HepG2 (cell line): ENCODE measurements at regions of chr3 and their contacts with region 1.

Region 1: DNA sequence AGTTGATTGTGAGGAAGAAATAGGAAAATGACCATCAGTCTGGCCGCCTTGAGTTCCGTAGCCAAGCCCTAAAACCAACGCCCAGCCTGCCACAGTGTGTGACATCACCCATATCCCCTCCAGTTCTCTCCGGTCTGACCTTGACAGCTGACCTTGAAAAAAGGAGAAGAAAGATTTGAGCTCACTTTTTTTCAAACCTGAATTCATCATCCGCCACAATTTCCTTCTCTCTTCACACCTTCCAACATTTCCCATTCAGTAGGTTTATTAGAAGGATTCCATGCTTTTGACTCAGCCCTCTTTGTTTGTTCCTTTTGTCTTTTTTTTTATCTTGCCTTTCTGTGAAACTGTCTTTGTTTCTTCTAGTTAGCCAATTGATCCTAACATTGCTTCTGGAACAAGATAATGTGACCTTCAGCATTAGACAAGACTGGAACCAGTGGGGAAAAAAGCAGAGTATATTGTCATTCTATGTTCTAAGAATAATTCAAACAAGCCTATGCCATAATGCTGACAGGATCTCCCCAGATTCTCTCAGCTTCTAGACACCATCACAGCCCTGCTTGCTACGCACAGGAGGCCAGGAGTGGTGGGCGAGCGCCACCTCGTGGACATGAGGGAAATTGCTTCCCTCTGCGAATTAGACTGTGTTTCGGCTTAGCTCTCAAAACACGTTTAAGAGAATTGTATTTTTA is 283.1 kb downstream of the FGF12 start:
- DNase-seq: peak; percentile 24
- ATAC-seq: peak; percentile 95
- H3K4me3 ChIP-seq: no peak overlapping the region
- H3K27ac ChIP-seq: no peak overlapping the region
- H3K4me1 ChIP-seq: no peaks in the 10 kb centered on the region
- H3K27me3 ChIP-seq: no peaks in the 10 kb centered on the region
- CTCF ChIP-seq: peak; percentile 95
- EP300 ChIP-seq: no peak
- POLR2A ChIP-seq: no peak
- RAD21 ChIP-seq: peak; percentile 74

Region 2: GRCh38 chr3:191412759-191413158 is 1031.5 kb before region 1 on chr3:
- CTCF ChIA-PET with region 1: interaction called, 4 read pairs
- POLR2A ChIA-PET with region 1: no interaction called
- in situ Hi-C with region 1: loop called (anchors 10 kb)
- intact Hi-C with region 1: loop called (anchors 1 kb)
- DNase-seq: no peak
- ATAC-seq: no peak
- H3K4me3 ChIP-seq: no peak overlapping the region
- H3K27ac ChIP-seq: no peak overlapping the region
- H3K4me1 ChIP-seq: no peaks in the 10 kb centered on the region
- H3K27me3 ChIP-seq: no peaks in the 10 kb centered on the region
- CTCF ChIP-seq: no peak
- EP300 ChIP-seq: no peak
- POLR2A ChIP-seq: no peak
- RAD21 ChIP-seq: no peak

Region 3: GRCh38 chr3:192130534-192131132 is 313.6 kb before region 1 on chr3:
- CTCF ChIA-PET with region 1: interaction called, 16 read pairs
- POLR2A ChIA-PET with region 1: no interaction called
- in situ Hi-C with region 1: no loop called
- intact Hi-C with region 1: loop called (anchors 1 kb)
- DNase-seq: peak; percentile 42
- ATAC-seq: peak; percentile 98
- H3K4me3 ChIP-seq: no peak overlapping the region
- H3K27ac ChIP-seq: no peak overlapping the region
- H3K4me1 ChIP-seq: no peaks in the 10 kb centered on the region; the same call in 1 of the 2 replicates
- H3K27me3 ChIP-seq: no peaks in the 10 kb centered on the region
- CTCF ChIP-seq: peak; percentile 70
- EP300 ChIP-seq: no peak
- POLR2A ChIP-seq: no peak
- RAD21 ChIP-seq: no peak

Region 4: DNA sequence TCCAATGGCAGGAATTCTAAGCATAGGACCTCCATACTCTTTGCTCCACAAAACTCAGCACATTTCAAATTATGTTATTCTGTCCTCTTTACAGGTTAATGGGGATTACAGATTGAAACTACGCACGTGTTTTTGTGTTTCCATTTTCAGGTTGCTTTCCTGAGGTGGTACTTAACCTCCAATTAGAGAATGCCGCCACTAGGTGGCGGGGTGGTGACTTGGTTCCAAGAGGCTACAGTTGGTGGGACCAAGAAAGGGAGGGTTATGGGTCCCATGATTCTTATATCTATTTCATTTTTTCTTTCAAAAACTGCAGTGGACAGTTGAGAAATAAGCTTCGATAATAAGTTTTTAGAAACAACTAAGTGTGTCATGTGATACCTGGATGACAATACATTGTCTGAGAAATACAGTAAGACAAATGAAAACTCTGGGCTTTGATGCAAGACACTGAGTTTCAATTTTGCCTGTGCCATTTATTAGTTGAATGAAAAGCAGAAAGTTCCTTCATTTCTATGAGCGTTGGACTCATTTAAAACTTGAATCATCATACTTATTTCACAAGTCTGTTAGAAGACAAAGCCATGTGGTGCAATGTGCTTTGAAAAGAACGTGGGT is 255.9 kb before region 1 on chr3:
- CTCF ChIA-PET with region 1: interaction called, 22 read pairs
- POLR2A ChIA-PET with region 1: no interaction called
- in situ Hi-C with region 1: loop called (anchors 5 kb)
- intact Hi-C with region 1: loop called (anchors 1 kb)
- DNase-seq: peak; percentile 33
- ATAC-seq: peak; percentile 89
- H3K4me3 ChIP-seq: no peak overlapping the region
- H3K27ac ChIP-seq: no peak overlapping the region
- H3K4me1 ChIP-seq: no peaks in the 10 kb centered on the region
- H3K27me3 ChIP-seq: no peaks in the 10 kb centered on the region; a peak in 1 of 5 replicates
- CTCF ChIP-seq: peak; percentile 74
- EP300 ChIP-seq: no peak
- POLR2A ChIP-seq: no peak
- RAD21 ChIP-seq: no peak

Region 5: DNA sequence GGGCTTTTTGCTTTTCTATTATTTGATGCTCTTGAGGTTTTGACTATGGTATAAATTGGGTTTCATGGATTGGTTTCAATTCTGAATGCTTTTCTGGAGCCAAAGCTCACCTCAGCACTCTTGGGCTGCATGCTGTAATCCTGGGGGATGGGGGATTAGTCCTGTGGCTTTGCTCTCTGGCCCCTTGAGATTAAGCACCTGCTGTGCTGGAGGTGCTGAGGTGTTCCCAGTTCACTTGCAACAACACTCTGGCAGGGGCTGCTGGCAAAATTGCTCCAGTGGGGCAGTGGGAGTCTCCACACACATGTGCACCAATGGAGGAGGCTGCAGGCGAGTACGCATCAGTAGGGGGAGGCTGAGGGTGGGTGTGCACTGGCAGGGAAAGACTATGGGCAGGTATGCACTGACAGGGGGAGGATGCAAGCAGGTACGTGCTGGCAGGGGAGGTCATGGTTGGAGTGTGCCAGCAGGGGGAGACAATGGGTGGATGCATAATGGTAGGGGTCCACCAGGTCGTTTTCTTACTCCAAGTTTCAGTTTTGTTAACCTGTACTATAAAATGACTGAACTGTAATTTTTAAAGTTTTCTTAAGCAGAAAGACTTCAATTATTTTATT is 206.1 kb before region 1 on chr3:
- CTCF ChIA-PET with region 1: no interaction called
- POLR2A ChIA-PET with region 1: no interaction called
- in situ Hi-C with region 1: no loop called
- intact Hi-C with region 1: loop called (anchors 1 kb)
- DNase-seq: no peak
- ATAC-seq: peak; percentile 62
- H3K4me3 ChIP-seq: no peak overlapping the region
- H3K27ac ChIP-seq: no peak overlapping the region
- H3K4me1 ChIP-seq: no peaks in the 10 kb centered on the region
- H3K27me3 ChIP-seq: no peaks in the 10 kb centered on the region
- CTCF ChIP-seq: 0 out of 2 replicates have a peak, but pooled peaks have one; percentile 12
- EP300 ChIP-seq: no peak
- POLR2A ChIP-seq: no peak
- RAD21 ChIP-seq: no peak

Region 6: DNA sequence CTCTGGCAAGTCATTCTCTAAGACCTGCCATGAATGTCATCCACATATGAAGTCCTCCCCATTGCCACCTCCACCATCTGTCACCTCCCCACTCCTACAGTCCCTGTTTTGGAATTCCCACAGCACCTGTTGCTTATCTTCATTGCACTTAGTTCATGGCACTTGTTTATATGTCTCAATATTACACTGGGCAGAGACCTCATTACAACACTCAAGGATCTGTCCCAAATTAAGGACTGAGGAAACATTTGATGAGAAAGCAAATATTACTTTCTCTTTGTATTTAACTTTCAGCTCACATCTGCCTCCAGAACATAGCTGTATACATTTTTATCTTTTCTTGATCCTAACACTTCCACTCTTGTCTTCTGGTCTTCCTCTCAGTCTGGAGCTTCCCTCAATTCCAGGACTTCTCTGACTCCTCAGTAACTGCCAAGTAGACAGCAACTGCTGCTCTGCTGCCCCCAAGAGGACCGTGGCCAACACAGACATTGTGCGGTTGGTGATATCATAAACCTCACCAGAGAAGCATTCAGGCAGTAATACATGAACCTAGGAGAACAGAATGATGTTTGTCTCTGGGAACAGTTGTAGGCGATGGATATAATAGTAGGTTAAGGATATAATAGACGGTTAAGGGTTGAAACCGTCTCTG is 328.1 kb after region 1 on chr3:
- CTCF ChIA-PET with region 1: no interaction called
- POLR2A ChIA-PET with region 1: no interaction called
- in situ Hi-C with region 1: no loop called
- intact Hi-C with region 1: no loop called
- DNase-seq: peak; percentile 2
- ATAC-seq: peak; percentile 85
- H3K4me3 ChIP-seq: no peak overlapping the region
- H3K27ac ChIP-seq: no peak overlapping the region
- H3K4me1 ChIP-seq: no peaks in the 10 kb centered on the region
- H3K27me3 ChIP-seq: no peaks in the 10 kb centered on the region; a peak in 1 of 5 replicates
- CTCF ChIP-seq: peak; percentile 54
- EP300 ChIP-seq: no peak
- POLR2A ChIP-seq: no peak
- RAD21 ChIP-seq: no peak